ENCODE measurements at regions of chr2 and their contacts with region 1.

Region 1: GRCh38 chr2:118865106-118865505 is 17.7 kb upstream of the EN1 start:
- ATAC-seq: peak; percentile 85 to 98 (median 93)
- H3K4me3 ChIP-seq: no peak overlapping the region
- H3K27ac ChIP-seq: no peak overlapping the region
- H3K4me1 ChIP-seq: no peaks in the 10 kb centered on the region

Region 2: DNA sequence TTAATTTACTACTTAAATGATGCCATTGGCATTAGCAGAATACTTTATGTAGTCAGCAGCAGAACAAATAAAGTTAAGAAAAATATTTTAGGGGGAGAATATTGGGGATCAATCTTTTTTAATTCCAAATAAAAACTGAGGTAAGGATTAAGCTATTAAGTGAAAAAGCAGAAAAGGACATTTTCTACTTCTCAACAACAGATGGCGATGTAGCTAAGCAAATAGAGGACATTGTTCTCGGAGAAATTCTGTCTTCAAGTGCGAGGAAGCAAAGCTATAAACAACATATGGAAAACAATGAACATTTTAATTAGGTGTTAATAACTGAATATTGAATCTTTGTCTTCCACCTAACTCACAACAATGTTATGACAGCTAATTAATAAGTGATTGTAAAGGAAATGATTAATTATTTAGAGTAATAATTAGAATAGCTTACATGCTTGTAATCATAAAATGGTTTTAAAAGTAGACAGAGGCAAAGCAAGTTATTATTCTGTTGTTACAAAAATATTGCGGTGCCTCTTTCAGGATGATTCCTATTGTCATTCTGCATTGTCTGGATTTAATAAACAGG is 818.4 kb before region 1 on chr2:
- in situ Hi-C with region 1: loop called in 7 of 9 experiments (anchors 10 to 25 kb)
- ATAC-seq: peak in 1 of 8 experiments; percentile 22
- H3K4me3 ChIP-seq: no peak overlapping the region
- H3K27ac ChIP-seq: no peak overlapping the region
- H3K4me1 ChIP-seq: peaks cover 24 to 30% of the 10 kb centered on the region in 2 donors

Region 3: DNA sequence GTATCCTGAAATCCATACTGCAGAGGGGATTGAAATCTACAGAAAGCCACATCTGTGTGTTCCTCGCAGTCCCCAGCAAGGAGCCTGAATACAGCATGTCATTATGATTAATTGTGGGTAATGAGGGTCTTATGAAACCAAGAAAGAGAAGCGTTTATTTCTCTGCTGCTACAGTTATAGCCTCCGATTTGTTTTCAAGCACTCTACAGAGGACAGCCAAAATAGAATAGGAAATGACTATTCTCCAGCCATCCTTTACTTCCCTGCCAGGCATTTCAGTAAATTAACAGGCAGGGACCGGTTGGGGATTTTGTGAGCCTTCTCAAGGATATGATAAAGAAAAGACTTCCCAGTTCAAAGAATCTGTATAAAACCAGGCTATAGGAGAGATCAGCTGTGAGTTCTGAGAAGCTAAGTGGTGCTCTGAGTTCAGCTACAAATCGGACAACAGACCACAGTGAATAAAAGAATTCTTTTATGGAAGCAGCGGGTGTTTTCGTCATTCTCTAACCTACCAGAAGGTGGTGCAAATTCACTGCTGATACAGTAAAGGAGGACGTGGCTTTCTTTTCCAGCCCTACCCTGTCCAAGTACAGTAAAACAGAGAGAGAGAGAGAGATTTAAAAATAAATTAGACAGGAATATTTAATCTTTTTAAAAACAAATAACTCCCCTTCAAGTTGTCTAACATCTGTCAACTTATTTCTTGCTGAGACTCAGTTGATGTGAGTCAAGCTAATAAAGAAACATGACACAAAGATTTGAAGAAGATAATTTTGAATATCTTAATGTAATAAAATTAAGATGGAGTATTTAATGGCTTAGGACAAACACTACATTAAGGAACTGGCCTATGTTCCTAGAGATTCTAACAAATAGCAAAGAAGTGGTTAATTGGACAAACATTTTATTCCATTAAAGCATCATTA is 643.2 kb before region 1 on chr2:
- in situ Hi-C with region 1: loop called in 2 of 9 experiments (anchors 10 to 25 kb)
- ATAC-seq: peak; percentile 77 to 90 (median 84)
- H3K4me3 ChIP-seq: no peak overlapping the region
- H3K27ac ChIP-seq: peak overlapping the region in 1 of 2 donors; percentile 5
- H3K4me1 ChIP-seq: peaks cover 25 to 34% of the 10 kb centered on the region in 2 donors

Region 4: GRCh38 chr2:118237451-118237850 is 627.7 kb before region 1 on chr2:
- in situ Hi-C with region 1: loop called in 1 of 9 experiments (anchors 10 kb)
- ATAC-seq: no peak
- H3K4me3 ChIP-seq: no peak overlapping the region
- H3K27ac ChIP-seq: no peak overlapping the region
- H3K4me1 ChIP-seq: no peaks in the 10 kb centered on the region